ENCODE measurements at regions of chr2 and their contacts with region 1.

Region 1: DNA sequence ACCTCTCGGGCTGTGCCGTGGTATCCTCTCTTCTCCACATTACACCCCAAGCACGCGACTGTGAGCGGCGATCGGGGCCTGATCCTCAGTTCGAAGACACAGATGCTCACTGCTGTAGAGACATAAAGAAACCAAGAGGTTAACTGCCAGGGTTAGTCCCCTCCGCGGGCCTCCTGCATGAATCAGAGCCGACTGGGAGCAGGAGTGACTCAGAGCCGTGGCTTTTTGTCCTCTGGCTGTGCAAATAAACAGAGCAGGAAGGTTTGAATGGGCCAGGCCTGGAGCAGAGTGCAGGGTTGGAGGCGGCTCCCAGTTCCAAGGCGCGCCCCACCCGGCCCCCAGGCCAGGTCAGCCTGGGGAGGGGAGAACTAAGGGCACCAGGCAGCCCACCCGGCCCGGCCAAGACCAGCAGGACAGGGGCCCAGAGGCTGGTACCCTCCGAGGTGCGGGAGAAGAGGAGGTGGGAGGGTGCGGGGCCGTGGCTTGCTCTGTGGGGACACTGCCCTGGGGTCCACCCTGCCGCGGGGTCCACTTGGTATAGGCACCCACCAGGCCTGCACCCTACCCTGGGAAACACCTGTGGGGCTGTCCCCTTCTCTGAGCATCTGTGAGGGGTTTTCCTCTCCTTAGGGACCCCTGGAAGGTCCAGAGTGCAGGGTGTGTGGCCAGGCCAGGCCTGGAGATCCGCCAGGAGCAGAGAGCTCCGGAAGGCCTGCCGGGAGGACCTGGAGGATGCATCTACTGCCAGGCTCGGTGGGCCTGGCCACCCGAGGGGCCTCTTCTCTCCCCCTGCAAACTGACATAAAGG is 16.5 kb downstream of the TWIST2 start:
- DNase-seq: peak; percentile 96 to 97
- H3K4me3 ChIP-seq: peak overlapping the region; percentile 29; the same call in 1 of the 2 replicates
- H3K27ac ChIP-seq: 0 out of 2 replicates have a peak overlapping the region, but pooled peaks have one; percentile 11
- H3K4me1 ChIP-seq: peaks cover 22% of the 10 kb centered on the region
- H3K27me3 ChIP-seq: no peaks in the 10 kb centered on the region; the same call in 1 of the 2 replicates
- CTCF ChIP-seq: no peak

Region 2: GRCh38 chr2:238895891-238896600 is 31.6 kb after region 1 on chr2:
- CTCF ChIA-PET with region 1: no interaction called
- POLR2A ChIA-PET with region 1: no interaction called
- intact Hi-C with region 1: loop called (anchors 1 kb)
- DNase-seq: peak; percentile 39 to 73
- H3K4me3 ChIP-seq: peak overlapping the region; percentile 41; the same call in 1 of the 2 replicates
- H3K27ac ChIP-seq: peak overlapping the region; percentile 65
- H3K4me1 ChIP-seq: peaks cover 25% of the 10 kb centered on the region
- H3K27me3 ChIP-seq: peaks cover 7% of the 10 kb centered on the region; the same call in 1 of the 2 replicates
- CTCF ChIP-seq: no peak

Region 3: GRCh38 chr2:238914648-238915015 is 50.2 kb after region 1 on chr2:
- CTCF ChIA-PET with region 1: no interaction called
- POLR2A ChIA-PET with region 1: no interaction called
- intact Hi-C with region 1: loop called (anchors 5 kb)
- DNase-seq: no peak
- H3K4me3 ChIP-seq: no peak overlapping the region
- H3K27ac ChIP-seq: no peak overlapping the region
- H3K4me1 ChIP-seq: 0 out of 2 replicates have a peak, but pooled peaks cover 5% of the 10 kb centered on the region
- H3K27me3 ChIP-seq: peaks cover 45% of the 10 kb centered on the region
- CTCF ChIP-seq: no peak

Measured in PC-9 (cell line).